ENCODE measurements at regions of chr12 and their contacts with region 1.

Region 1: GRCh38 chr12:108017472-108018057 is 111.5 kb upstream of the WSCD2 start:
- DNase-seq: no peak
- H3K4me3 ChIP-seq: no peak overlapping the region
- H3K27ac ChIP-seq: no peak overlapping the region
- H3K4me1 ChIP-seq: no peaks in the 10 kb centered on the region
- H3K27me3 ChIP-seq: no peaks in the 10 kb centered on the region
- CTCF ChIP-seq: no peak
- EP300 ChIP-seq: no peak
- POLR2A ChIP-seq: no peak

Region 2: DNA sequence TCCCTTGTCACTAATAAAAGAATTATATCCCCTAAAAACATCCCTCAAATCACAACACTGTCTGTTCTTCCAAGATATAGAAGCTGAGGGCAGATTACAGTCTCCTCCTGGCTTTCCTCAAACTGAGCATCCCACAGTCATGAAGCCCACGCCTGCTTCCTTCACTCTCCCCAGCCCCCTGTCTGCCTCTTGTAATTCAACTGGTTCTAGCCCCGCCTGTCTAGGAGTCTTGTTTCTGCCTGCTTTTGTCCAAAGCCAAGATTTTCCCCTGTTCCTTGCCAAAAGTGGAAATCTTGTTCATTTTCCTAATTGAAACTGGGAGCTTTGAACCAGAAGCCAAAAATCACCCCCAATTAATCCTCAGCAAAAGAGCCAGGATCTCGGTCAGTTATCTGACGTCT is 367.9 kb before region 1 on chr12:
- in situ Hi-C with region 1: no loop called
- intact Hi-C with region 1: loop called (anchors 5 kb)
- DNase-seq: no peak
- H3K4me3 ChIP-seq: no peak overlapping the region
- H3K27ac ChIP-seq: no peak overlapping the region
- H3K4me1 ChIP-seq: no peaks in the 10 kb centered on the region
- H3K27me3 ChIP-seq: no peaks in the 10 kb centered on the region
- CTCF ChIP-seq: no peak
- EP300 ChIP-seq: no peak
- POLR2A ChIP-seq: no peak

Region 3: GRCh38 chr12:108040947-108041346 is 23.4 kb after region 1 on chr12:
- in situ Hi-C with region 1: no loop called
- intact Hi-C with region 1: loop called (anchors 1 kb)
- DNase-seq: no peak
- H3K4me3 ChIP-seq: no peak overlapping the region
- H3K27ac ChIP-seq: no peak overlapping the region
- H3K4me1 ChIP-seq: no peaks in the 10 kb centered on the region
- H3K27me3 ChIP-seq: no peaks in the 10 kb centered on the region
- CTCF ChIP-seq: no peak
- EP300 ChIP-seq: no peak
- POLR2A ChIP-seq: no peak

Region 4: DNA sequence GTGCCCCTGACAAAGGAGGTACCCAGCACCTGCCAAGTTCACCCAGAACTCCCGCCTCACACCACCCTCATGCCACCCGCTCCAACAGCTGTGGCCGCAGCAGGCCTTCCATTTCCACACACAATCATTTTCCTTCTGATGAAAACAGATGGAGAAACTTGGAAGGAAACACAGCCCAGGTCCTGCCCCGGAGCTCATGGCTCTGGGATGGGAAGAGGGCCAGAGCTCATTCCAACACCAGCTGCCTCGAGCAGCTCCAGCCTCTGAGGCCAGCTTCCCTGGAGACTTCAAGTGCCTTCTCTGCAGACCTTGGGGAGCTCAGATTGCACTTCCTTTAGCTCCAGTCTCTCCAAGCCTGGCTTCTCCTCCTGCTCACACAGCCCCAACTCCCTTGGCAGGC is 376.6 kb after region 1 on chr12:
- in situ Hi-C with region 1: no loop called
- intact Hi-C with region 1: no loop called
- DNase-seq: no peak
- H3K4me3 ChIP-seq: no peak overlapping the region
- H3K27ac ChIP-seq: no peak overlapping the region
- H3K4me1 ChIP-seq: peaks cover 0 to 4% (median 0%) of the 10 kb centered on the region in 4 donors
- H3K27me3 ChIP-seq: no peaks in the 10 kb centered on the region
- CTCF ChIP-seq: no peak
- EP300 ChIP-seq: no peak
- POLR2A ChIP-seq: no peak

Measured in transverse colon (tissue), 4 donors.